ENCODE measurements at regions of chr2 and their contacts with region 1.

Region 1: GRCh38 chr2:191617575-191617974 is 60.4 kb upstream of the NABP1 start:
- DNase-seq: peak; percentile 79
- H3K4me3 Mint-ChIP-seq: no peak overlapping the region
- H3K27ac Mint-ChIP-seq: peak overlapping the region; percentile 97
- H3K4me1 Mint-ChIP-seq: peaks cover 68% of the 10 kb centered on the region
- H3K27me3 Mint-ChIP-seq: no peaks in the 10 kb centered on the region

Region 2: GRCh38 chr2:191171708-191172355 is 445.7 kb before region 1 on chr2:
- CTCF ChIA-PET with region 1: no interaction called
- intact Hi-C with region 1: loop called (anchors 5 kb)
- DNase-seq: no peak
- H3K4me3 Mint-ChIP-seq: no peak overlapping the region
- H3K27ac Mint-ChIP-seq: peak overlapping the region; percentile 38
- H3K4me1 Mint-ChIP-seq: peaks cover 75% of the 10 kb centered on the region
- H3K27me3 Mint-ChIP-seq: no peaks in the 10 kb centered on the region

Region 3: GRCh38 chr2:191189112-191189635 is 428.4 kb before region 1 on chr2:
- CTCF ChIA-PET with region 1: no interaction called
- intact Hi-C with region 1: loop called (anchors 1 kb)
- DNase-seq: no peak
- H3K4me3 Mint-ChIP-seq: no peak overlapping the region
- H3K27ac Mint-ChIP-seq: peak overlapping the region; percentile 68
- H3K4me1 Mint-ChIP-seq: peaks cover 73% of the 10 kb centered on the region
- H3K27me3 Mint-ChIP-seq: no peaks in the 10 kb centered on the region

Region 4: DNA sequence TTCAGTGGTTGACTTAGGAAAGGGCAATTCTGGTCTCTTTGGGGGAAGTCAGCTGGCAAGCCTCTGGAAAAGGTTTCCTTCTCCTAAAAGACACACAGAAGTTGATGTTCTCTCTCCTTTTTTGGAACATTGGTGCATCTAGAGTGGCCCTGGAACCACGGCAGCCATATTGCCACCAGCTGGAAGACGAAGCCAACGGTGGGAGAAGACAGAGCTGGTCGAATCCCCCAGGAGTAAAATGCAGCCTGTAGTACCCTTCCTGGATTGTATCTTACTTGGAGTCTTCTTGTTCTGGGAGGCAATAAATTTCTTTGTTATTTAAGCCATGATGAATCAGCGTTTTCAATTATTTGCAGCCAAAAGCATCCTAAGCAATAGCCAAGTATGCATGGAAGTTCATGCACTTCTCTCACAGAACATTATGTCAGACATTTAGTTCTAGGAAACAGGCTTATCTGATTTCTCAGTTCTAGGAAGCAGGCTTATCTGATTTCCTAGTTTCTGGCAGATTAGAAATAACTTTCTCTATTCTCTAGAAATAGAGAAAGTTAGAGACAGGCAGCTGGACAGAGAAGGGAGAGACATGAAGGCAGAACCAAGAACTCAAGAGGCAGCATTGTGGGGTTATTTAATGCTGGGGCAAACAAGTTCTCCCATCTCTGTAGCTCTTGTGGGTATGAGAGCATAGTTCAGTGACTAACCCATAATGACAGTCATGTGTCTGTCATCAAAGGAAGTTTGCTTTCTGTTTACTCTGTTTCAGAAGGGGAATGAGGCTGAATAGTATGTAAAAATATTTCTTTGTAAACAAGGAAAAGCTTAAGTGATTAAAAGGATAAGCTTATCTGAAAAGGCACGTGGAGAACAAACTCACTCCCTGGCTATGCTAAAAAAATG is 19.9 kb after region 1 on chr2:
- CTCF ChIA-PET with region 1: interaction called, 6 read pairs
- intact Hi-C with region 1: loop called (anchors 1 kb)
- DNase-seq: no peak
- H3K4me3 Mint-ChIP-seq: no peak overlapping the region
- H3K27ac Mint-ChIP-seq: peak overlapping the region; percentile 77
- H3K4me1 Mint-ChIP-seq: peaks cover 58% of the 10 kb centered on the region
- H3K27me3 Mint-ChIP-seq: no peaks in the 10 kb centered on the region

Region 5: DNA sequence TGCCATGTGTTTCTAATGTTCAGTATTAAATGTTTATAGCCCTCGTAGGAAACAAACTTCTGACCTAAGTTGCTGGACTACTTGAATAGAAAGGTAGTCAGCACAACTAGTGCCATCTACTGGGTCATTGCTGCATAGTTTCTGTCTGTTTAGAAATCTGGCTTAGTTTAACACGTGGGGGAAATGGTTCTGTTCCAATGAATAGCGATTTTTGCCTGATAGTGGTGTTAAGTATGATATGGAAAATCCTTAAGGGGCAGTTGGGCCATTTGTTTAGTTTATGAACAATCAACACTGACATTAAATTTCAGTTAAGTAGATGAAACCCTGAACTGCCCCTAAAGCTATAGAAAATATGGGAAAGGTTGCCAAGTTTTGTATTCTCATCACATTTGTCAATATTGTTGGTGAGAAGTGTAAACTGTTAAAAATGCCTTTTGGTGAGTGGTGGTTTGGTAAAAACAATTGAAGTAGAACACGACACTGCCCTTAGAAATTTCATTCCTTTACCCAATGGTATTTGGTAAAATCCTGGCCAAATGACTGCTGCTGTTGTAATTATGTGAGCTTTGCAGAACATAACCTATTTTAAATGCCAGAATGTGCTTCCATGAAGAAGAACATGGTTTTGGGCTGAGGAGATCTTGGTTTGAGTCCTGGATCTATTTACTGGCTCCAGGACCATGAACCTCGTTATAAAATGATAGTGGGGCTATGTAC is 73.6 kb after region 1 on chr2:
- CTCF ChIA-PET with region 1: interaction called, 4 read pairs
- intact Hi-C with region 1: loop called (anchors 1 kb)
- DNase-seq: peak; percentile 73
- H3K4me3 Mint-ChIP-seq: no peak overlapping the region
- H3K27ac Mint-ChIP-seq: peak overlapping the region; percentile 72
- H3K4me1 Mint-ChIP-seq: peaks cover 66% of the 10 kb centered on the region
- H3K27me3 Mint-ChIP-seq: no peaks in the 10 kb centered on the region

Region 6: DNA sequence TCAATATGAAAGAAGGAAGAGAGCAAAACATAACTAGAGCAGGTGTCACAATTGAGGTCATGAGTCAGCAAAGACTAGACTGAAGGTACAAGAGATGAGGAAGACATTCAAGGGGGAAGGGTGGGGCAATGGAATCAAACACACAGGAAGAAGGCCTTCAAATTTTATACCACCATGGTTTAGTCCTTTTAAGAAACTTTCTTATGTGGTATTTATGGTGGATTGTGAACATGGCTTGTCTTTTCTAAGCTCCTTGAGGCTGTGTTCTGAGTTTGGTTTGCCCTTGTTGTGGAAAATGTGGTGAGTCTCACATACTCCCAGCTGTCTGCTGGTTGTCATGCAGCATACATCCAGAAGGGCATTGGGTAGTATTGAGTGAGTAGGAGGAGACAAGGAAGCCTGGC is 122.4 kb after region 1 on chr2:
- CTCF ChIA-PET with region 1: no interaction called
- intact Hi-C with region 1: loop called (anchors 1 kb)
- DNase-seq: peak; percentile 50
- H3K4me3 Mint-ChIP-seq: no peak overlapping the region
- H3K27ac Mint-ChIP-seq: peak overlapping the region; percentile 47
- H3K4me1 Mint-ChIP-seq: peaks cover 12% of the 10 kb centered on the region
- H3K27me3 Mint-ChIP-seq: peaks cover 3% of the 10 kb centered on the region